Right ventricle myocardium superior (tissue), 1 donor: ENCODE measurements at regions of chr6 and their contacts with region 1.

Region 1: DNA sequence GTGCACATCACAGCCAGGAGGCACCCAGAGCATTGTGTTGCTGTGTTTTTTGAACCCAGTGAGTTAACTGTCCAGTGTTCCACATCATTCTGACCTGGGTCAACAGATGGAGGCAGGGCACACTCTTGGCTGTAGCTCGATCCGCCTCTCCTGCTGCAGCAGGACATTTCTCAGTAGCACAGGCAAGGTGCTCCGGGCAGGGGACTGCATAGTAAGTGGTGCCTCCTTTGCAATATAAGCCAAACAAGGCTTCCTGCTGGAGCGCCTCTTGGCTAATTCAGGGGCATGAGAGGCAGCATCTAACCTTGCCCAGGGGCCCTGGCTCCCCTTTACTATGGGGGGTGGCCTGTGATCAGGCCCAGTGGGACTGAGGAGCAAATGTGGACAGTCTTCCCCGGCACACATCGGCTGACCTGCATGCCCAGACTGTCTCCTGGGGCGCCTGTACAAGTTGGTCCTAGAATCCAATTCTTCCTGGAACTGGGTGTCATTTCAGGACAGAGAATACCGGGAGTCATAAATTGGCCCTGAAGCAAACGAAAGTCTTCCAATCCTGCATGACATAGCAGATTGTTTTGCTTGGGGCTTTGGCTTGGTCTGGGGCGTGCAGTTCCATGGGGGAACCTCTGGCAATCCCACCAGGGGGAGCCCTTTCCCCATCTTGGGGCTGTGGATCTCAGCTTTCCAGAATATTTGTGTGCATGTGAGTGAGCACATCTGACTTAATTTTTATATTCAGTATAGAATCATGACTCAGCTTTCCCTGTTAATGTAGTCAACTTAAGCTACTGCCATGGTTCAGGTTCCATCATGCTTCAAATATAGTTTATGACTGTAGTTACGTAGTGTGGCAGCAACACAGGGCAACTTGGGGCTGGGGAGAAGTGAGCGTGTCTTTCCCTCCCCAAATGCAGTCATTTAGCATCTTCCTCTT is 56.0 kb upstream of the DDR1 start:
- DNase-seq: peak; percentile 91
- ATAC-seq: peak; percentile 96

Region 2: GRCh38 chr6:30556066-30556905 is 272.0 kb before region 1 on chr6 and contains the start of gene GNL1:
- intact Hi-C with region 1: no loop called
- DNase-seq: peak; percentile 96
- ATAC-seq: peak; percentile 85
- total RNA-seq, gene GNL1: 17.6 TPM

Region 3: GRCh38 chr6:30877419-30878371 is 49.4 kb after region 1 on chr6:
- intact Hi-C with region 1: loop called (anchors 2 kb)
- DNase-seq: peak; percentile 94
- ATAC-seq: peak; percentile 94

Region 4: DNA sequence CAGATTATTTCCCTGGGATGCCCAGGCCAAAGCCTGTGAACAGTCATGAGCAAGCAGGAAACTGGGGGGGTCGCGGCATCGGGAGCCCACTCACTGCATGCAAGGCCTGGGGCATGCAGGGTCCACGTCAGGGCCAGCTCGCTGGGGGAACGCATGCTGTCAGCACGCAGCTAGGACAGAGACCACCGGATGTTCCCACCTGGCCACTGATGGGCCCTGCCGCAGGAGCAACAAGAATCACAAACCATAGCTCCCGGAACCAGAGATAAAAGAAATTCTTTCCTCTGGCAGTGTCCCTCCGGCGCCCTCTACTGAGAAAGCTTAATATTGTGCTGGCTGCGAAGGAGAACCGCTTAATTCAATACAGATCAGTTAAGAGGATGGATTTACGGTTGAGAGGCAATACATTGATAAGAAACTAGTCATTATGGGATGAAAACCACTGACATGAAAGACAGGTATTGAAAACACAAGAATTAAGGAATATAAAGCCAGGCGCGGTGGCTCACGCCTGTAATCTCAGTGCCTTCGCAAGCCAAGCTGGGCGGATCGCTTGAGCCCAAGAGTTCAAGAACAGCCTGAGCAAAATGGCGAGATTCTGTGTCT is 251.5 kb after region 1 on chr6:
- intact Hi-C with region 1: loop called (anchors 5 kb)
- DNase-seq: peak; percentile 68
- ATAC-seq: peak; percentile 85